ENCODE measurements at regions of chr20 and their contacts with region 1.

Region 1: GRCh38 chr20:4014031-4014474 is 1.3 kb downstream of the RNF24 start:
- DNase-seq: no peak

Region 2: DNA sequence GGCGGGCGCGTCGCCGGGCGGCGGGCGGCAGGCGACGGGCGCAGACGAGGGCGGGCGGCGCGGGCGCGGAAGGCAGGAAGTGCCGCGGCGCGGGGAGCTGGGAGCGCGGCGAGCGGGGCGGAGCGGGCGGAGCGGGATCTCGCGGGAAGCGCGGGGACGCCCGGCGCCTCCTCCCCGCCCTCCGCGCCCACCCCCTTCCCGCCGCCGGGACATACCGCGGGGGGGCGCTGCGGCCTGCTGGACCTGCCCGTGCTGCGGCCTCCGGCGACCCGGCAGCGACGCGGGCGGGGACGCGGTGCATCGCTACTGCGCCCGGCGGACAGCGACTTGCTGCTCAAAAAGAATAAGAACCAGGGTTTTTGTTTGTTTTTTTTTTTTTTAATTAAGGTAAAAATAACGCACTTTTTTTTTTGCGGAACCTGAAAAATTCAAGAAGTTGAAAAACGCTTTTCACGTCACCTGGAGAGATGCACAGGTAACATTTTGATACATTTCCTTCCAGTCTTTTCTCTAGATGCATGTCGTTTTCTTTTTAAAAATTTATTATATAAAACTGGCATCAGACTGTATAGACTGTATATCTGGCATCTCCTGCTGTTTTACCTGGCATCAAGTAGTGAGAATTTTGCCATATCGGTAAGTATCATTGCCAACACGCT is 227.3 kb before region 1 on chr20 and contains the start of gene CENPB:
- intact Hi-C with region 1: loop called (anchors 10 kb)
- DNase-seq: peak; percentile 94
- total RNA-seq, gene CENPB: 79.8 TPM

Region 3: GRCh38 chr20:3888622-3889488 is 125.2 kb before region 1 on chr20 and contains the start of gene PANK2:
- intact Hi-C with region 1: loop called (anchors 2 kb)
- DNase-seq: peak; percentile 100
- total RNA-seq, gene PANK2: 21.5 TPM

Region 4: DNA sequence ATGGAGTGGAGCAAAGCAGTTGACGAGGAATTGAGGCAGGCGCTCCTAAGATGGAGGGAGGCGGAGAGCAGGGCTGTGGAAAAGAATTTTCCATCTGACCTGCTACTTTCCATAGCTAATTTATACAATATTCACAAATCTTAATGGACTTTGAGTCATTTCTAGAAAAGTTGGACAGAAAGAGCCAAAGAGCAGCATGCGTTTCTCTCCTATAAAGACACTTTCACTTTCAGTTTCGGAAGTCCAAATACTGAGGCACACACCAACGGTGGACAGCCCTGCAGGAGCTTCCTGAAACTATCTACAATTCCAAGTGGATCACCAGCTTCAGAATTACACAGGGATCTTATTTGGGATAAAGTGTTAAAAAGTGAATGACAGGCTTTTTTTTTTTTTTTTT is 81.4 kb before region 1 on chr20:
- intact Hi-C with region 1: loop called (anchors 5 kb)
- DNase-seq: no peak

Region 5: GRCh38 chr20:4064144-4064909 is 50.3 kb after region 1 on chr20:
- intact Hi-C with region 1: loop called (anchors 1 kb)
- DNase-seq: peak; percentile 94

Region 6: GRCh38 chr20:4084096-4084495 is 70.0 kb after region 1 on chr20:
- intact Hi-C with region 1: loop called (anchors 2 kb)
- DNase-seq: no peak

Region 7: GRCh38 chr20:4161401-4162251 is 147.6 kb after region 1 on chr20:
- intact Hi-C with region 1: no loop called
- DNase-seq: no peak